Activated naive CD4-positive, alpha-beta T cell treated with anti-CD3 and anti-CD28 coated beads, Interleukin-2, amount 10 ng/mL, durations not matched to agents 7 days and 5 days (primary cell): ENCODE measurements at regions of chr22 and their contacts with region 1.

Region 1: GRCh38 chr22:39514373-39514973 is 5.9 kb upstream of the ATF4 start:
- DNase-seq: peak; percentile 74
- H3K4me3 Mint-ChIP-seq: no peak overlapping the region
- H3K27ac Mint-ChIP-seq: peak overlapping the region; percentile 35
- H3K4me1 Mint-ChIP-seq: peaks cover 38% of the 10 kb centered on the region
- H3K27me3 Mint-ChIP-seq: no peaks in the 10 kb centered on the region

Region 2: GRCh38 chr22:39405346-39406085 is 109.0 kb before region 1 on chr22:
- CTCF ChIA-PET with region 1: no interaction called
- DNase-seq: no peak
- H3K4me3 Mint-ChIP-seq: no peak overlapping the region
- H3K27ac Mint-ChIP-seq: peak overlapping the region; percentile 38
- H3K4me1 Mint-ChIP-seq: peaks cover 65% of the 10 kb centered on the region
- H3K27me3 Mint-ChIP-seq: no peaks in the 10 kb centered on the region

Region 3: DNA sequence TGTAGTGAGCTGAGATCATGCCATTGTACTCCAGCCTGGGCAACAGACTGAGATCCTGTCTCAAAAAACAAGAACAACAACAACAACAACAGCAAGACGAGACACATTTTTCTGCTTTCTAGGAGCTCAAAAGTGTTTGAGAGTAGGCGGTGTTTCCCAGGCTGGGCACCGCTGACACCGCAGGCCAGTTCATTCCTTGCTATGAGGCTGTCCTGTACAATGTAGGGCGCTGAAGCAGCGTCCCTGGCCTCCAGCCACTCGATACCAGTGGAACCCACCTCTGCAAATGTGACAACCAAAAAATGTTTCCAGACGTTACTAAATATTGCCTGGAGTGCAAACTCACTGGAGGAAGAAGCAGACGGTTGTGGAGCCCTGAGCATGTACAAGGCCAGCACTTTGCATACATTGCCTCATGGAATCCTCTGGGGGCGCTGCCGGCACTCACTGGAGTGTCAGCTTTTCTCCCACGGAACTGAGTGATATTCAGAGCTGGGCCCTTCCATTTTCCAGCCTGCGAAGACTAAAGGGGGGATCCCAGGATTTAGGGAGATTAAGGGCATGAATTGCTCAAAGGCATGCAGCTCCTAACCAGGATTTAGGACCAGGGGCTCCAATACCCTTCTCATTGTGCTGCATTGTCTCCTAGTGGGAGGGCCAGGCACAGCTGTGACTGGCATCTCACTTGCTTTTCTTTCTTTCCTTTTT is 18.2 kb before region 1 on chr22:
- CTCF ChIA-PET with region 1: interaction called, 152 read pairs
- DNase-seq: peak; percentile 73
- H3K4me3 Mint-ChIP-seq: no peak overlapping the region
- H3K27ac Mint-ChIP-seq: no peak overlapping the region
- H3K4me1 Mint-ChIP-seq: peaks cover 22% of the 10 kb centered on the region
- H3K27me3 Mint-ChIP-seq: peaks cover 25% of the 10 kb centered on the region

Region 4: DNA sequence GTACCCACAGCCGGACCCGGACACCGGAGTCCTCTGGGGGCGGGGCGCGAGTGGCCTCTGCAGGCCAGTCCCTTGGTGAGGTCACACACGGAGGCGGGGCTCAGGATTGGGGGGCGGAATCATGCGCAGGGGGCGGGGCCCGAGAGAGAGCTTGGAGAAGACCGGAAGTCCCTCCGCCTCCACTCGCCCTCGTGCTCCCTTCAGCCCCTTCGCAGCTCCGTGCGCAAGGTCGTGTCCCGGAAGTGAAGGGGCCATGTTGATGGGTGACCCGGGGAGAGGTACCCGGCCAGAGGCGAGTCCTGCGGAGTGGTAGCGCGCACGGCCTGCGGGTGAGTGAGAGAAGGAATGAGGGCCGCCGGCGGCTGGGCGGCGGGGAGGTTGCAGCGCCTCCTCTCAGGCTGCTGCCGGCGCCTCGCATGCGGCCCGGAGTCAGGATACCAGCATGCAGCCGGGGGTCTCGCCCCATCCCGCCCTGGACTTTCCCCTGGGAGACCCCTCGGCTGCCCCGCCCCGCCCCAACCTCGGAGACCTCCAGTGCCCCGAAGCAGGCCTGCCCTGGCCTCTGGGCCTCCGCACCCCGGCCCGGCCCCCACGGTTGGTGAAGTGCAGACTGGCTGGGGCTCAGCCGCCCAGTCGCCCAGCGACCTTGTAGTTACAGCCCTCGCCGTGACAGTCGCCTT is 12.2 kb before region 1 on chr22 and contains the start of gene MIEF1:
- CTCF ChIA-PET with region 1: interaction called, 152 read pairs
- DNase-seq: peak; percentile 94
- H3K4me3 Mint-ChIP-seq: peak within 1 kb of the TSS; percentile 93
- H3K27ac Mint-ChIP-seq: peak within 1 kb of the TSS; percentile 88
- H3K4me1 Mint-ChIP-seq: peaks cover 43% of the 10 kb centered on the region
- H3K27me3 Mint-ChIP-seq: peaks cover 21% of the 10 kb centered on the region